Mammary epithelial cell (primary cell): ENCODE measurements at regions of chr17 and their contacts with region 1.

Region 1: DNA sequence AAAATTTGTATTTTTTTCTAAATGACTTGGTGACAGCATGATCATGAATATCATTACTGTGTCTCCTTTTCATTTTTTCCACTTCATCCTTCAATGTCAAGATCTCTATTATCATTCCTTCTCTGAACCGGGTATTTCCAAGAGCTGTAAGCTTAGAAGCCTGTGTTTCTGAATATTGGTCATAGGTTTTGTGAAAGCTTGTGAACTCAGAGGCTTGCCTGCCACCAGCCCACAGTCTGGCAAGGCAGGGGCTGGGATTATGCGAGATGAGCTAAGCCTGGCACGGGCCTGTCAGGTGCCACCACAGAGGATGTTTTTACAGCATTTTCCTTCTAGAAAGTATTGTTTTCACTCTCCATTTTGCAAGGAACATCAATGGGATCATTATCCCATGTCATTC is 92.8 kb downstream of the MYH10 start:
- DNase-seq: no peak
- H3K4me3 ChIP-seq: no peak overlapping the region
- H3K27ac ChIP-seq: no peak overlapping the region
- H3K4me1 ChIP-seq: no peaks in the 10 kb centered on the region
- H3K27me3 ChIP-seq: no peaks in the 10 kb centered on the region
- CTCF ChIP-seq: no peak

Region 2: DNA sequence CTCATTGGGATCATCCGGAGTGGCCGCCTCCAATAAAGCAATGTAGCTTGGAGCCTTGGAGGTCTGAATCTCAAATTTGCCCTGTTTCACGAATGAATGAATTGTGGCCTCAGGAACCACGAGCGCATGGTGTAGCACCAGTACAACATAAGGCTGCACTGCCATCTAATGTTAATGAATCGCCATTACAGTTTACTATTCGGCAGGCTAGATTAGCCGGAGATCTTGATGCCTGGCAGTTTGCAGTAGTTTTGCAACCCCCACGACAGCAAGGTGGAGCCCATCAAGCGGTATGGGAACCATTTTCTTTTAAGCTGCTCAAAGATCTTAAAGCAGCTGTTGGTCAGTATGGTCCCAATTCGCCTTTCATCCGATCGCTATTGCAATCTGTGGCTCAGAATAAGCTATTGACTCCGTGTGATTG is 480.0 kb before region 1 on chr17:
- CTCF ChIA-PET with region 1: no interaction called
- dilution Hi-C with region 1: no loop called
- in situ Hi-C with region 1: no loop called
- intact Hi-C with region 1: no loop called
- DNase-seq: peak; percentile 76
- H3K4me3 ChIP-seq: no peak overlapping the region
- H3K27ac ChIP-seq: no peak overlapping the region
- H3K4me1 ChIP-seq: peaks cover 25% of the 10 kb centered on the region
- H3K27me3 ChIP-seq: no peaks in the 10 kb centered on the region
- CTCF ChIP-seq: peak; percentile 74 to 79

Region 3: DNA sequence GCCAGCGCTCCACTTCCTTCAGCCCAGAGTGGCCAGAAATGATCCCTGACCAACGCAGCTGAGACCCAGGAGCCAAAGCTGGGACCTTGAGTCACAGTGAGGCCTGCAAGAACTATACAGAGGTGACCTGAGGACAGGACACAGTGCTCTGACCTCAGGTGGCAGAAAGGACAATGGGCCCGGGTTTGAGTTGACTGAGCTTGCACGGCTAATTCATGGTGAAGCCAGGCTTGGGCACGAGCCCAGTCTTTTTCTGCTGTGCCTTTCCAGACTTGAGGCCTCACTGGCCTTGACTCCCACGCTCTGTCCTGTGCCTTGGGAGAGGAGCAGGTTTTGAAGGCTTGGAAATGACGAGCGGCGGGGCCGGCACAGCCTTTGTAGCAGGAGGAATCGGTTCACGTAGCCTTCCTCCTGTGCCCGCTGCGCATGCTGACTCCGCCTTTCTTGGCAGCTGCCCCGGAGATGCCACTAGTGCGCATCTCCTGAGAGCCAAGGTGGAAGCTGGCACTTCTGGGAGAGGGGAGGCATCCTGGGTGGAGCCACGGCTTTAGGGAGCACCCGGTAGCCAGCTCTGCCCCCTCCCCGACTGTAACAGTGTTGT is 67.2 kb before region 1 on chr17:
- CTCF ChIA-PET with region 1: no interaction called
- dilution Hi-C with region 1: no loop called
- in situ Hi-C with region 1: no loop called
- intact Hi-C with region 1: no loop called
- DNase-seq: peak; percentile 62
- H3K4me3 ChIP-seq: no peak overlapping the region
- H3K27ac ChIP-seq: no peak overlapping the region
- H3K4me1 ChIP-seq: peaks cover 15% of the 10 kb centered on the region
- H3K27me3 ChIP-seq: no peaks in the 10 kb centered on the region
- CTCF ChIP-seq: no peak

Region 4: DNA sequence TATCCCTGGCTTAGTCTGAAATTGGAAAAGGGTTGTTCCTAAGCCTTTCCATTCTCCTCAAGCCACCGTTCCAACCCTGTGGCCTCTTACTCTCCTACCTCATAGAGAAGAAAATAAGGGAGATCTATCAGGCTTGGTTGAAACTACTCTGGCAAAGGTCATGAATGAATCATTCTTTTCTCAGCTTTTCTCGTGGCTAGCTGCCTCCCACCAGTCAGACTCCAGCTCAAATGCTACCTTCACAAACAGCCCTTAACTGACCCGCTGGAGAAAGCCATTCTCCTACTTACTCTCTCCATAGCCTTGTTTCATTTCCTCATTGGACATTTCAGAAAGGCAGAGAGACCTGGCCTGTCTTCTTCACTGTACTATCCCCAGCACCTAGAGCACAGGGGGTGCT is 83.9 kb after region 1 on chr17:
- CTCF ChIA-PET with region 1: no interaction called
- dilution Hi-C with region 1: loop called (anchors 5 kb)
- in situ Hi-C with region 1: no loop called
- intact Hi-C with region 1: no loop called
- DNase-seq: no peak
- H3K4me3 ChIP-seq: no peak overlapping the region
- H3K27ac ChIP-seq: no peak overlapping the region
- H3K4me1 ChIP-seq: no peaks in the 10 kb centered on the region
- H3K27me3 ChIP-seq: no peaks in the 10 kb centered on the region
- CTCF ChIP-seq: no peak